Right cardiac atrium (tissue), 5 donors: ENCODE measurements at regions of chr17 and their contacts with region 1.

Region 1: GRCh38 chr17:11511696-11512095 is 86.6 kb upstream of the DNAH9 start:
- DNase-seq: no peak
- ATAC-seq: no peak
- H3K4me3 ChIP-seq: no peak overlapping the region
- H3K27ac ChIP-seq: no peak overlapping the region
- H3K4me1 ChIP-seq: no peaks in the 10 kb centered on the region
- H3K27me3 ChIP-seq: no peaks in the 10 kb centered on the region

Region 2: GRCh38 chr17:11430751-11431150 is 80.9 kb before region 1 on chr17:
- intact Hi-C with region 1: no loop called
- DNase-seq: no peak
- ATAC-seq: no peak
- H3K4me3 ChIP-seq: no peak overlapping the region
- H3K27ac ChIP-seq: no peak overlapping the region
- H3K4me1 ChIP-seq: no peaks in the 10 kb centered on the region
- H3K27me3 ChIP-seq: no peaks in the 10 kb centered on the region

Region 3: GRCh38 chr17:11551442-11551841 is 39.7 kb after region 1 on chr17:
- intact Hi-C with region 1: no loop called
- DNase-seq: no peak
- ATAC-seq: no peak
- H3K4me3 ChIP-seq: no peak overlapping the region
- H3K27ac ChIP-seq: no peak overlapping the region
- H3K4me1 ChIP-seq: no peaks in the 10 kb centered on the region
- H3K27me3 ChIP-seq: no peaks in the 10 kb centered on the region

Region 4: GRCh38 chr17:11578998-11579397 is 67.3 kb after region 1 on chr17:
- intact Hi-C with region 1: loop called in 1 of 4 experiments (anchors 10 kb)
- DNase-seq: no peak
- ATAC-seq: no peak
- H3K4me3 ChIP-seq: no peak overlapping the region
- H3K27ac ChIP-seq: no peak overlapping the region
- H3K4me1 ChIP-seq: no peaks in the 10 kb centered on the region
- H3K27me3 ChIP-seq: no peaks in the 10 kb centered on the region

Region 5: DNA sequence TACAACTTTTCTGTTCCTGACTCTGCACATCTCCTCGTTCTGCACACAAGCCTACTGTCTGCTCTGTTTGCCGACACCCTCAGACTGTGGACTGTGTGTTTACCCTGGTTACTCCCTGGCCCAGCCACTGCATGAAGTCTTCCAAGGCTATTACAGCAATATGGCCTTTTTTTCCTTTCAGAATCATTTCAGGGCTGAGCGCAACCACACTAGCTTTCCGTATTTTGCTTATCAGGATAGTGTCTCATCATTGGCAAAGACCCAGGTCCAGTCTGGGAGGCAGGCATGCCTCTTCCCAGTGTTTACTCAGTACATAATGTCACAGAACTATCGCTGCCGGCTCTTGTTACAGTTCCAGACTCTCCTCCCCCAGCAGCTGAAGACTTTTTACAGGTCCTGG is 96.7 kb after region 1 on chr17:
- intact Hi-C with region 1: no loop called
- DNase-seq: peak; percentile 42 to 68 (median 49)
- ATAC-seq: peak; percentile 88 to 92
- H3K4me3 ChIP-seq: no peak overlapping the region
- H3K27ac ChIP-seq: peak overlapping the region; percentile 14
- H3K4me1 ChIP-seq: peaks cover 3% of the 10 kb centered on the region
- H3K27me3 ChIP-seq: no peaks in the 10 kb centered on the region

Region 6: GRCh38 chr17:11618861-11619566 is 107.3 kb after region 1 on chr17:
- intact Hi-C with region 1: no loop called
- DNase-seq: peak in 1 of 3 donors; percentile 26
- ATAC-seq: peak in 1 of 2 donors; percentile 28
- H3K4me3 ChIP-seq: no peak overlapping the region
- H3K27ac ChIP-seq: no peak overlapping the region
- H3K4me1 ChIP-seq: no peaks in the 10 kb centered on the region
- H3K27me3 ChIP-seq: no peaks in the 10 kb centered on the region